Ascending aorta (tissue), 2 donors: ENCODE measurements at regions of chr9 and their contacts with region 1.

Region 1: DNA sequence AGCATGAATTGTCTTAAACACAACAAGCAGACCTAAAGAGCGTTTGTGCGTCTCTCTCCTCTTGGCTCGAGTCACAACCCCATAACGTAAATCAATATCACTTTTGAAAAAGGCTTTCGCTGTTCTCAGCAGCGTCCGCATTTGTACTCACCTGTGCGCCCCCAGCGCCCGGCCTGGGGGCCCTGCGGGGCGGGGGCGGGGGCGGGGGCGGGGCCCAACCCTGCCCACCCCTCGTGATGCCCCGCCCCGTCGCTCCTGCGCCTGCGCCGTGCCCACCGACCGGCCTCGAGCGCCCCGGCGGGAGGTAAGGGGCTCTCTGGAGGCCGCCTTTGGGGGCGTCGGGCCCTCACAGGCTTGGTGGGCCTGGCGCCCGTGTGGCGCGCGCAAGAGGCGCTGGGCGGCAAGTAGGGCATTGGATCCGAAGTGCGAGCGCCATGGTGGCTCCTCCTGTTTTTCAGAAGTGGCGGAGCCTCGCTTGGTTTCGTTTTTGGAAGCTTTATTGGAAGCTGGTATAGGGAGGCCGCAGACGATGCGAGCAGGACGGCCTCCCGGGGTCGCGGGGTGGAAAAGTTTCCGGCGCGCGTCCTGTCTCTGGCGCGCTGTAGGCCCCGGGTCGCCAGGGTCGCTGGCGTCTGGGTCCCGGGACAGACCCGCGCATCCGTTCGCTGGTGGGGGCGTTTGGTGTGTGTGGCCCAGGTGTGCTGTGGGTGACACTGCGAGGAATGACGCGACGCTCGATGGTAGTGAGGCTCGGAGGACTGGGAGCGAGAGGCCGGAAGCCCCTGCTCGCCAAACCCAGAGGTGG is at the start of gene STX17:
- DNase-seq: peak; percentile 21 to 80
- H3K4me3 ChIP-seq: peak within 1 kb of the TSS; percentile 74 to 99
- H3K27ac ChIP-seq: peak within 1 kb of the TSS; percentile 91 to 97
- H3K4me1 ChIP-seq: no peaks in the 10 kb centered on the region
- H3K27me3 ChIP-seq: no peaks in the 10 kb centered on the region
- CTCF ChIP-seq: peak in 2 of 3 experiments; percentile 3 to 6
- total RNA-seq, gene STX17: 24.9 TPM

Region 2: GRCh38 chr9:99184475-99185347 is 721.9 kb before region 1 on chr9:
- intact Hi-C with region 1: loop called (anchors 10 kb)
- DNase-seq: peak; percentile 47 to 94
- H3K4me3 ChIP-seq: peak overlapping the region; percentile 31 to 60
- H3K27ac ChIP-seq: peak overlapping the region; percentile 42 to 60
- H3K4me1 ChIP-seq: peaks cover 4 to 6% of the 10 kb centered on the region in 2 donors
- H3K27me3 ChIP-seq: no peaks in the 10 kb centered on the region
- CTCF ChIP-seq: peak; percentile 87 to 98 (median 93)

Region 3: GRCh38 chr9:99266255-99267023 is 640.2 kb before region 1 on chr9:
- intact Hi-C with region 1: loop called (anchors 10 kb)
- DNase-seq: peak in 1 of 2 donors; percentile 72
- H3K4me3 ChIP-seq: no peak overlapping the region
- H3K27ac ChIP-seq: no peak overlapping the region
- H3K4me1 ChIP-seq: no peaks in the 10 kb centered on the region
- H3K27me3 ChIP-seq: no peaks in the 10 kb centered on the region
- CTCF ChIP-seq: peak; percentile 47 to 81 (median 77)

Region 4: GRCh38 chr9:99353408-99353807 is 553.2 kb before region 1 on chr9:
- intact Hi-C with region 1: no loop called
- DNase-seq: peak in 1 of 2 donors; percentile 76
- H3K4me3 ChIP-seq: no peak overlapping the region
- H3K27ac ChIP-seq: no peak overlapping the region
- H3K4me1 ChIP-seq: no peaks in the 10 kb centered on the region
- H3K27me3 ChIP-seq: no peaks in the 10 kb centered on the region
- CTCF ChIP-seq: no peak

Region 5: GRCh38 chr9:99851500-99851822 is 55.1 kb before region 1 on chr9:
- intact Hi-C with region 1: no loop called
- DNase-seq: no peak
- H3K4me3 ChIP-seq: no peak overlapping the region
- H3K27ac ChIP-seq: no peak overlapping the region
- H3K4me1 ChIP-seq: no peaks in the 10 kb centered on the region
- H3K27me3 ChIP-seq: no peaks in the 10 kb centered on the region
- CTCF ChIP-seq: no peak

Region 6: DNA sequence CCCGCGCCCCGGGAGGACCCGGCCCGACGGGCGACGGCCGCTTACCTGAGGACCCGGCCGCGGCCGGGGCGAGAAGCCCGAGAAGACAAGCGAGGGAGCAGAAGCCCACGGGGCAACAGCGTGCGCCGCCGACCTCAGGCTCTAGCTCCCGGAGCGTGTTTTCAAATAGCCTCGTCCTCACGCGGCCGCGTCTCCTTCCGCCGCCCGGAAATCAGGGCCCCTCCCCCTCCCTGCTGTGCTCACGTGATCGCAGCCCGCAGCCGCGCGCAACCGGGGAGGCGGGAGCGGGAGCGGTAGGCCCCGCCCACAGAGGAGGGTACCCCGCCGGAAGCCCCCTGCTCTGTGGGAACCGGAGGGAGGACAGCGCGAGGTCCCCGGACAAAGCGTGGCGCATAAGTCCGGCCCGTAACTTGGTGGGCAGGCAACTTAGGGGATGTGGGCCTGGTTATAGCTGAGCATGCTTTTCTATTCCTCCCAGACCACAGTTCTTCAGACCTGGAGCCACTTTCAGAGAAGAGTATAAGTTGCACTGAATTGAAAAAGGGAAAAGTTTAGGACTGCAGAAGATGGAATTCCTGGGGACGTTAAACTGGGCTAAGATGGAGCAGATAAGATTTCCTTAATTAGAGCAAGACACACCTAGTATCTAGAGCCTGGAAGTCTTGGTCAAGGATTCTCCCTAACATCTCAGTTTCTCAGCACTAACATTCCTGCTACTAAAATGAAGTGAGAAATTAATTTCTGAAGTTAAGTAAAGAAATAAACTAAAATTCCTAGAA is 446.3 kb after region 1 on chr9 and contains the start of gene TEX10:
- intact Hi-C with region 1: loop called (anchors 5 kb)
- DNase-seq: peak; percentile 18 to 93
- H3K4me3 ChIP-seq: peak within 1 kb of the TSS; percentile 97
- H3K27ac ChIP-seq: peak within 1 kb of the TSS; percentile 78 to 85
- H3K4me1 ChIP-seq: peaks cover 3% of the 10 kb centered on the region in 2 donors
- H3K27me3 ChIP-seq: no peaks in the 10 kb centered on the region
- CTCF ChIP-seq: no peak
- total RNA-seq, gene TEX10: 2.3 TPM

Region 7: DNA sequence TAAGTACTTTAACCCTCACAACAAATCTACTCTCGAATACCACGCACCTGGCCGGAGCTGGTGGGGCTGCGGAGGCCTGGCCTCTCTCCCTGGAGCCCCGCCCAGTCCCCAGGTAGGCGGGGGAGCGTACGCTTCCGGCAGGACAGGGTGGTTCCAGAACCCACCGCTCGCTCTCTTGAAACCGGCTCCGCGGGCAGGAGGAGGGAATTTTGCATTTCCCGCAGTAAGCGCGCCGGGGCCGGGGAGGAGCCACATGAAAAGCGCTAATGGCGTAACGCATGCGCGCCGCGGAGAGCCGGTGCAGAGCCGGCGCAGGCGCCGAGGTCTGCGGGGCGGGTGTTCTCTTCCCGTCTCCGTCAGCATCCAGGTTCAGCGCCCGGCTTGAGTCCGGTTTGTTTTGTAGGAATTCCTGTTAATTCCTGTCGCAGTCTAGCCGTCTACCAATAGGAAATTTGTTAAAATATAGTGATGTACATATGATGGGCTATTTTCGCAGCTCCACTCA is 692.1 kb after region 1 on chr9:
- intact Hi-C with region 1: loop called (anchors 5 kb)
- DNase-seq: peak in 1 of 2 donors; percentile 88
- H3K4me3 ChIP-seq: peak overlapping the region; percentile 47 to 63
- H3K27ac ChIP-seq: no peak overlapping the region
- H3K4me1 ChIP-seq: peaks cover 0 to 5% of the 10 kb centered on the region in 2 donors
- H3K27me3 ChIP-seq: no peaks in the 10 kb centered on the region
- CTCF ChIP-seq: no peak